ENCODE measurements at regions of chr1 and their contacts with region 1.

Region 1: DNA sequence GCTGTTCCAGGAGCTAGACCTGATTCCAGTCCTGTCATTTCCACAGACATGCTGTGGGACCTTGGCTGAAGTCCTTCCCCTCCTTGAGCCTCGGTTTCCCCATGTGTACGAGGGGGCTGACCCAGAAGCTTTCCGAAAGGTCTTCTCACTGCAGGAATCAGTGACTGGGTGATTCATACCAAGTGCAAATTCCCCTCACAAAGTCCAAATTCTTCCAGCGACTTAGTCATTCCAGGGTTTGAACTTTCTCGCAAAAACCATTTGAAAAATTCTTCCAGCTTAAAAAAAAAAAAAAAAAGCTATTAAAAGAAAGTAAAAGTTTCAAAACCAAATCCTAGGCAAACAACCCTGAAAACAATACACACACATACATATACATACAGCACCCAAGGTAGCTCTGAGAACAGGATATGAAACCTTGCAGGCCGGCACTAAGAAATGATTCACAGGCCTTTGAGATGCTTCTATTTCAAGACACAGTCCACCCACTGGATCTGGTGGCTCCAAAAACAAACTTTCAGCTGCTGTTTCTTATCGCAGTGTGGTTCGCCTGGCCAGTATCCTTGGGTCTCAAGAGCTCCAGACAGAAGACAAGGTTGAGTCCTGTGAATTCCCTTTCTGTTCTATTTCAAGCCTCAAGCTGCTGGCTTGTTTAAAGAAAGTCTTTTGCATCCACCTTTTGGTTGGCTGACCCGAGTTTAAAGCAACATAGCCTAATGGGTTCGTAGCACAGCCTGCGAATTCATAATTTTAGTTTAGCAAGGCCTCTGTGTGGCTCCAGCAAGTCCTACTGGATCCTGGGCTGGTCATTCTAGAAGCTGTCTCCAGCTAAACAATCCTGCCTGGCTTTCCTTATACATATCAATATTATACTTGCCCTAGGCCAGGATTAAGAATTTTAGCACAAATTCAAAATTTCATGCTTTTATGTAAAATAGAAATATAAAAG is 18.0 kb upstream of the ID3 start:
- DNase-seq: peak; percentile 92
- H3K4me3 ChIP-seq: peak overlapping the region; percentile 69
- H3K27ac ChIP-seq: peak overlapping the region; percentile 97
- H3K4me1 ChIP-seq: peaks cover 97% of the 10 kb centered on the region
- CTCF ChIP-seq: no peak

Region 2: GRCh38 chr1:23517581-23517980 is 59.7 kb before region 1 on chr1:
- CTCF ChIA-PET with region 1: no interaction called
- POLR2A ChIA-PET with region 1: no interaction called
- intact Hi-C with region 1: no loop called
- DNase-seq: no peak
- H3K4me3 ChIP-seq: no peak overlapping the region
- H3K27ac ChIP-seq: no peak overlapping the region
- H3K4me1 ChIP-seq: peaks cover 4% of the 10 kb centered on the region
- CTCF ChIP-seq: no peak

Region 3: DNA sequence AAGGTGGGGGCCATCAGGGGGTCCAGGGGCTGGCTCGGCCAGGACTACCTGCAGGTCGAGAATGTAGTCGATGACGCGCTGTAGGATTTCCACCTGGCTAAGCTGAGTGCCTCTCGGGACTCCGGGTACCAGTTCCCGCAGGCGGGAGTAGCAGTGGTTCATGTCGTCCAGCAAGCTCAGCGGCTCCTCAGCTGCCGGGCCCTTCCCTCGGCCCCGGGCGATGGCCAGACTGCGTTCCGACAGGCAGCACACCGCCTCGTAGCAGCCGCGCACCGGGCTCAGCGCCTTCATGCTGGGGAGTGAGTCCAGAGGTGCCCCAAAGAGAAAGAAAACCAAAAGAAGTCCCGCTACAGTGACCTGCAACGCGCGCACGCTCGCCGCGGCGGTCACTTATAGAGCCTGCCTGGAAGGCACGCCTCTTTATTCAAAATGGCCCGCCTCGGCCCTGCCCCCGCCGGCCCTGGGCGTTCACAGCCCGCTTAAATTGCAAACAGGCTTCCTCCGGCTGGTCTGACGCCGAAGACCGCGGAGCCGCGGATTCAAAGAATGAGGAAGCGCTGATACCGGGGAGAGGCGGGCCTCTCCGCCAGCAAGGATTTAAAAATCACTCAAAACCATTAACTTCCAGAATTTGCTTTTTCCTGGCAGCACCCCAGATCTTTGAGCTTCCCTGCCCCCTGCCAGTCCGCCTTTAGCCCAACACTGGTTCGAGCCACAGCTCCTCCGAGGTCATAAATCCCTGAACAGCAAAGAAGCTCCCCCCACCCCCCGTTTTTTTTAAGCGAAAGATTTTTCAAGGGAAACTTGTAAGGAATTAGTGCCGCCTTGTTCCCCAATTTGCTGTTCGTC is 18.0 kb before region 1 on chr1 and contains the start of gene ID3:
- CTCF ChIA-PET with region 1: interaction called, 3 read pairs
- POLR2A ChIA-PET with region 1: interaction called, 259 read pairs
- intact Hi-C with region 1: loop called (anchors 1 kb)
- DNase-seq: peak; percentile 97
- H3K4me3 ChIP-seq: peak within 1 kb of the TSS; percentile 94
- H3K27ac ChIP-seq: peak within 1 kb of the TSS; percentile 97
- H3K4me1 ChIP-seq: peaks cover 68% of the 10 kb centered on the region
- CTCF ChIP-seq: 0 out of 2 replicates have a peak, but pooled peaks have one; percentile 13
- total RNA-seq, gene ID3: 1,286 and 1,658 TPM in 2 replicates

Region 4: DNA sequence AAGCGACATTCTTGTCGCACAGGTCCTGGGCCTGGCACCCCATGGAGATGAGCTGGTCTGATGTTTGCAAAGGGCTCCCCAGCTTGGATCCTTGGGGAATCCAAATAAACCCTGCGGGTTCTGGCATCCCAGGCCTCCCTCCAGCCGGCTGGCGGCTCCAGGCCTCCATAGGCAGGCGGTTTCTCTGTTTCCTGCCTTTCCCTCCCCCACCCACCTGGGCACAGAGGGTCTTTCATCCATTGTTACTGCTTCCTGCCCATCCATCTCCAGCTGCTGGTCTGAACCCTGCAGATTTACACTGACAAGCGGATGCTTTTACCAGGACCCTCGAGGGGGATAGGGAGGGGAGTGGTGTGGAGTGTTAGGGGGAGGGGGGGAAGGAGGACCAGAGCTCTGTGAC is 21.1 kb after region 1 on chr1:
- CTCF ChIA-PET with region 1: interaction called, 9 read pairs
- POLR2A ChIA-PET with region 1: interaction called, 261 read pairs
- intact Hi-C with region 1: no loop called
- DNase-seq: peak; percentile 78
- H3K4me3 ChIP-seq: peak overlapping the region; percentile 53
- H3K27ac ChIP-seq: peak overlapping the region; percentile 94
- H3K4me1 ChIP-seq: peaks cover 100% of the 10 kb centered on the region
- CTCF ChIP-seq: no peak

Region 5: DNA sequence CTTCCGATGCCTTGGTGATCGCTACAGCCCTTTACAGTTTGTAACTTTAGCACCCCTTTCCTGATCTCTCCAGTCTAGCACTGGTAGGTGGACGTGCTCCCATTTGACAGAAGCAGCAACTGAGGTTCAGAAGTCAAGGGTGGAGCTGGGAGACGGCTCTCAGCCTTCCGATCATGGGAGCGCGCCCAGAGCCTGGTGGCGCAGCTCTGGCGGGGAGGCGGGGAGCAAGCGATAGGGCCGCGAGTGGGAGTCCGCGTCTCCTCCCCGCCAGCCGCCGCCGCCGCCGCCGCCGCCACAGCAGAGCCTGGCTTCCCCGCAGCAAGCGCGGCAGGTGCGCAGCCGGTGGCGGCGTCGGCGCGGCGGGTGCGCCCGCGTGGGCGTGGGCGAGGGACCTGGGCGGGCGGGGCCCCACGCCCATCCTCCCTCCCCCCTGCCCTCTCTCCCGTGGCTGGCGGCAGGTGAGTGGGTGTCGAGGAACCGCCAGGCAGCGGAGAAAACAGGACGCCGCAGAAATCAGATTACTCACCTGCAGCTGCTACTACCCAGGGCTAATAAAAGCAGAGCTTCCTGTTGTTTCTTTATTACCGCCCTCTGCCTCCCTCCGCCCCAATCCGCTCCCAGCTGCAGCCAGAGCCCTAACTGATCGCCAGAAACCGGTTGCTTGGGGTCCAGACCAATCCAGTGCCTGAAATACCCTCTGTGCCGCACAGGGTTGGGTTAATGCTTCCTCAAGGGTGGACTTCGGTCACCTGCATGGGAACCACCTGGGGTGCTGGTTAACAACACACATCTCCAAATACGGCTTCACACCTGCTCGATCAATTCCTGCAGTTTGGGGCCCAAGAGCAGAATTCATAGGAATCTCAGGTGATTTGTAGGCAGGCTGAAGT is 42.2 kb after region 1 on chr1:
- CTCF ChIA-PET with region 1: interaction called, 8 read pairs
- POLR2A ChIA-PET with region 1: interaction called, 101 read pairs
- intact Hi-C with region 1: no loop called
- DNase-seq: peak; percentile 97
- H3K4me3 ChIP-seq: peak overlapping the region; percentile 69
- H3K27ac ChIP-seq: peak overlapping the region; percentile 99
- H3K4me1 ChIP-seq: peaks cover 95% of the 10 kb centered on the region
- CTCF ChIP-seq: no peak

Region 6: GRCh38 chr1:23634842-23635651 is 57.7 kb after region 1 on chr1:
- CTCF ChIA-PET with region 1: interaction called, 10 read pairs
- POLR2A ChIA-PET with region 1: interaction called, 34 read pairs
- intact Hi-C with region 1: no loop called
- DNase-seq: peak; percentile 82
- H3K4me3 ChIP-seq: peak overlapping the region; percentile 52
- H3K27ac ChIP-seq: peak overlapping the region; percentile 85
- H3K4me1 ChIP-seq: peaks cover 92% of the 10 kb centered on the region
- CTCF ChIP-seq: peak; percentile 93

Region 7: GRCh38 chr1:23657659-23658275 is 80.4 kb after region 1 on chr1:
- CTCF ChIA-PET with region 1: no interaction called
- POLR2A ChIA-PET with region 1: no interaction called
- intact Hi-C with region 1: no loop called
- DNase-seq: peak; percentile 80
- H3K4me3 ChIP-seq: no peak overlapping the region
- H3K27ac ChIP-seq: no peak overlapping the region
- H3K4me1 ChIP-seq: peaks cover 42% of the 10 kb centered on the region
- CTCF ChIP-seq: peak; percentile 98

Region 8: DNA sequence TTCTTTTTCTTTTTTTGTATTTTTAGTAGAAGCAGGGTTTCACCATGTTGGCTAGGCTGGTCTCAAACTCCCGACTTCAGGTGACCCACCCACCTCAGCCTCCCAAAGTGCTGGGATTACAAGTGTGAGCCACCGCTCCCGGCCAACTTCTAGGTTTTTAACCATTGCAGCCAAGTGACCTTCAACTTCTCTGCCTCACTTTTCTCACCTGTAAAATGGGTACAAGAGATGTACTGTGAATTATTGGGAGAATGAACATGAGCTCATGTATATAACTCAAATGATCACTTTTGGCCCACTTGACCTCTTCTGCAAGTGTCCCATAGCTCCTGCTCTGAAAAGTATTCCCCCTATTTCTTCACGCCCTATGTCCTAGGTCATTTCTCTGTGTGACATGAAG is 102.5 kb after region 1 on chr1:
- CTCF ChIA-PET with region 1: no interaction called
- POLR2A ChIA-PET with region 1: no interaction called
- intact Hi-C with region 1: no loop called
- DNase-seq: no peak
- H3K4me3 ChIP-seq: no peak overlapping the region
- H3K27ac ChIP-seq: no peak overlapping the region
- H3K4me1 ChIP-seq: no peaks in the 10 kb centered on the region
- CTCF ChIP-seq: no peak